AG04449 (cell line): ENCODE measurements at regions of chr3 and their contacts with region 1.

Region 1: GRCh38 chr3:156474560-156475389 is 80.1 kb downstream of the SSR3 start:
- DNase-seq: no peak
- H3K4me3 ChIP-seq: no peak overlapping the region
- CTCF ChIP-seq: peak; percentile 14

Region 2: GRCh38 chr3:156341831-156342416 is 132.9 kb before region 1 on chr3:
- CTCF ChIA-PET with region 1: no interaction called
- POLR2A ChIA-PET with region 1: no interaction called
- DNase-seq: no peak
- H3K4me3 ChIP-seq: no peak overlapping the region
- CTCF ChIP-seq: no peak

Region 3: GRCh38 chr3:156460206-156460611 is 14.6 kb before region 1 on chr3:
- CTCF ChIA-PET with region 1: interaction called, 23 read pairs
- POLR2A ChIA-PET with region 1: no interaction called
- DNase-seq: no peak
- H3K4me3 ChIP-seq: no peak overlapping the region
- CTCF ChIP-seq: no peak

Region 4: GRCh38 chr3:156586905-156587759 is 112.4 kb after region 1 on chr3:
- CTCF ChIA-PET with region 1: no interaction called
- POLR2A ChIA-PET with region 1: no interaction called
- DNase-seq: no peak
- H3K4me3 ChIP-seq: no peak overlapping the region
- CTCF ChIP-seq: no peak